Right ventricle myocardium superior (tissue), 1 donor: ENCODE measurements at regions of chr16 and their contacts with region 1.

Region 1: GRCh38 chr16:636206-637080 is at the start of gene METTL26:
- DNase-seq: peak; percentile 98
- ATAC-seq: peak; percentile 91
- total RNA-seq, gene METTL26: 52.5 TPM

Region 2: DNA sequence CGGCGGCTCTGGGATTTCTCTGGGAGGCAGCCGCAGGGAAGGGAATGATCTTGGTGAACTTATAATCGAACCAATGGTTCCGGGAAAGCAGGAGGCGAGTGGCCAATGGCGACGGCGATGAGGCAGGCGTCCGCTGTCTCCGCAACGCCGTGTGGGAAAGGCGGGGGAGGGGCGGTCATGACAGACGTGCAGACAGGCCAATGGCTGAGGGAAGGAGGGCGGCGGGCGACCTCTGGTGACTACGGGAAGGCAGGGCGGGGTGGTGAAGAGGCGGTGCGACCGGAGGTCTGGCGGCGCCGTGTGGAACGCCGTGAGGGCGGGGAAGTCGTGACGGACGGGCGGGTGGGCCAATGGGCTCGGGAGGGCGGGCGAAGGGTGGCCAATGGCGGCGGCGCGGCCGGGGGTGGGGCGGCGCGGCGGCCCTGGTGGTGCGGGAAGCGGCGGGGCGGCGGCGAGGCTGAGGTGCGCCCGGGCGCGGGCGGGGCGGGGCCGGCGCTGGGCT is 46.7 kb before region 1 on chr16 and contains the start of gene RAB40C:
- intact Hi-C with region 1: loop called (anchors 5 kb)
- DNase-seq: peak; percentile 99
- ATAC-seq: peak; percentile 95
- total RNA-seq, gene RAB40C: 11.0 TPM